ENCODE measurements at regions of chr6 and their contacts with region 1.

Region 1: GRCh38 chr6:44655412-44656342 is 268.2 kb downstream of the CDC5L start:
- DNase-seq: peak; percentile 86
- ATAC-seq: peak; percentile 89
- H3K4me3 ChIP-seq: no peak overlapping the region
- H3K27ac ChIP-seq: no peak overlapping the region
- H3K4me1 ChIP-seq: peaks cover 11% of the 10 kb centered on the region
- H3K27me3 ChIP-seq: no peaks in the 10 kb centered on the region
- CTCF ChIP-seq: peak; percentile 92

Region 2: DNA sequence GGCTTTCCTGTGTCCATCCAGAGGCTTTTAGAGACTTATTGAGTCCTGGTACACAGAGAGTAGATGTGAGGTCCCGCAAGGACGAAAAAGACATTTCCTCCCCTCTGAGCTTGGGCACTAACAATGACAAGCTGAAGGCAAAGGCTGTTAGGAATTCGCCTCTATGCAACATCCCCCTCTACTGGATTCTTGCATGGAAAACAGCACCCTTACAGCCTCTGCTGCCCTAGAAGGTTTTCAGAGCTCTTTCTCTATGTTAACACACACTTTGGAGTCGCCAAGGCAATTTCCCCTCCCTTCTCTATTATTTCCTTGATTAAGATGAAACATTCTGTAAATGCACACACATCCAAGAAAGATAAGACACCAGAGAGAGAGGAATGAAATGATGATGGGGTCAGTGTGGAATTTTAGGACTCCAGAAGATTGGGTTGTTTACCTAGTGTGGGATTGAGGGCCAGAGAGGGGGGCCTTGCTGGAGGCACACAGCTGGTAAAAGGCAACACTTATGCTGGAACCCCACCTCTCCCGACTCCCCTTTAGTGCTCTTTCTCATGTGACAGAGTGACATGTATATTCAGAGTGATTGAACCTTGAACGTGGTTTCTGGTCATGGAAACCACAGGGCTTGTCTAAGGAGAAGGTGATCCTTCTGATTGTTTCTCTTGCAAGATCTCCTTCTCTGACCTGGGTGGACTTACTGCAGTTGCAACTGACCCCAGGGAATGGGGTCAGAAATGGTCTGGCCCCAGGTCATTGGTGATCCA is 1059.2 kb after region 1 on chr6:
- intact Hi-C with region 1: loop called (anchors 10 kb)
- DNase-seq: no peak
- ATAC-seq: peak; percentile 93
- H3K4me3 ChIP-seq: no peak overlapping the region
- H3K27ac ChIP-seq: no peak overlapping the region
- H3K4me1 ChIP-seq: peaks cover 15% of the 10 kb centered on the region
- H3K27me3 ChIP-seq: no peaks in the 10 kb centered on the region
- CTCF ChIP-seq: peak; percentile 82

Region 3: DNA sequence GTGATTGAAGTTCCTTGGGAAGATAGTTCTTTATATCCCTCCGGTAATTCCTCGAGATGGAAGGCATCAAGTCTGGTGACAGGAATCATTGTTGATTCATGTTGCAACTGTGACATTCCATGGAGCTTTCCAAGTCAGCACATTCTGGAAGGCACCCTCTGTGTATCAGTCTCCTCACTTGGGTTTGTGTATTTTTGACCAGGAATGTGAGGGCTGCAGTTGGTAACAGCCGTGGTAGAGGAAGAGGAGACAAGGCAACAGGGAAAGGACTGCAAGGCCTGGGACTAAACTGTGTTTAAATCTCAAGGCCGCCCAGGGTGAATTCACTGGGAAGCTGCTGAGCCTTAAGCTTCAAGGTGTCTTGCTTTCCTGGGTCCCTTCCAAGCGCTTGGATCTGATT is 1261.0 kb after region 1 on chr6:
- intact Hi-C with region 1: loop called (anchors 10 kb)
- DNase-seq: no peak
- ATAC-seq: peak; percentile 38
- H3K4me3 ChIP-seq: no peak overlapping the region
- H3K27ac ChIP-seq: no peak overlapping the region
- H3K4me1 ChIP-seq: no peaks in the 10 kb centered on the region
- H3K27me3 ChIP-seq: no peaks in the 10 kb centered on the region
- CTCF ChIP-seq: no peak